ENCODE measurements at regions of chr12 and their contacts with region 1.

Region 1: GRCh38 chr12:53005986-53006809 is at the start of gene EIF4B:
- DNase-seq: peak; percentile 100
- H3K4me3 ChIP-seq: peak within 1 kb of the TSS; percentile 73
- H3K27ac ChIP-seq: peak within 1 kb of the TSS; percentile 94
- H3K4me1 ChIP-seq: peaks cover 35% of the 10 kb centered on the region
- H3K27me3 ChIP-seq: no peaks in the 10 kb centered on the region
- CTCF ChIP-seq: no peak
- total RNA-seq, gene EIF4B: 393 and 400 TPM in 2 replicates

Region 2: DNA sequence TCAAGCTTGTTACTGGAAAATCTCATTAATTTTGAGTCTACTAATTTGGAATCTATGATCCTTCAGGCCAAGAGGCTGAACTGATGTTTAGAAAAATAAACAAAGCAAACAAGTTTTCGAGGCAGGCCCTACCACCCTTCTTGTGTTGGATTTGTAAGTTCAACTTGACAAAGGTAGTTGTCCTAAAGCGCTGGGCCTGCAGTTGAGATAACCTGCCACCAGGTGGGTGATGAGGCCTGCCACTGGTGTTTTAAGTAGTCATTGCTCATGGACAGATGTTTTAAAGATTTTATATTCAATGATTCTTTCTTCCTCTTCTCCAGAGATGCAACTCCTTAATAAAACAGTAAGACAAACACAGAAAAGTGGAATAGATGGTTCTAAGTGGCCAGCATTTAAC is 1079.5 kb before region 1 on chr12:
- CTCF ChIA-PET with region 1: no interaction called
- POLR2A ChIA-PET with region 1: no interaction called
- intact Hi-C with region 1: no loop called
- DNase-seq: peak; percentile 54
- H3K4me3 ChIP-seq: no peak overlapping the region
- H3K27ac ChIP-seq: no peak overlapping the region
- H3K4me1 ChIP-seq: no peaks in the 10 kb centered on the region
- H3K27me3 ChIP-seq: no peaks in the 10 kb centered on the region
- CTCF ChIP-seq: peak; percentile 57

Region 3: DNA sequence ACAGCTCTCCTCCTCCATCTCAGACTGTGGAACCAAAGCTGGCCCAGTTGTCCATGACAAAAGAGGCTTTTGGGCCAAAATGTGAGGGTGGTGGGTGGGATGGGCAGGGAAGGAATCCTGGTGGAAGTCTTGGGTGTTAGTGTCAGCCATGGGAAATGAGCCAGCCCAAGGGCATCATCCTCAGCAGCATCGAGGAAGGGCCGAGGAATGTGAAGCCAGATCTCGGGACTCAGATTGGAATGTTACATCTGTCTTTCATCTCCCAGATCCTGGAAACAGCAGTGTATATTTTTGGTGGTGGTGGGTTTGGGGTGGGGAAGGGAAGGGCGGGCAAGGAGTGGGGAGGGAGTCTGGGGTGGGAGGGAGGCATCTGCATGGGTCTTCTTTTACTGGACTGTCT is 1011.2 kb before region 1 on chr12:
- CTCF ChIA-PET with region 1: interaction called, 12 read pairs
- POLR2A ChIA-PET with region 1: no interaction called
- intact Hi-C with region 1: no loop called
- DNase-seq: no peak
- H3K4me3 ChIP-seq: no peak overlapping the region
- H3K27ac ChIP-seq: no peak overlapping the region
- H3K4me1 ChIP-seq: no peaks in the 10 kb centered on the region
- H3K27me3 ChIP-seq: no peaks in the 10 kb centered on the region
- CTCF ChIP-seq: no peak

Region 4: GRCh38 chr12:52949413-52950331 is 56.5 kb before region 1 on chr12:
- CTCF ChIA-PET with region 1: no interaction called
- POLR2A ChIA-PET with region 1: interaction called, 3 read pairs
- intact Hi-C with region 1: loop called (anchors 5 kb)
- DNase-seq: peak; percentile 59
- H3K4me3 ChIP-seq: peak overlapping the region; percentile 54
- H3K27ac ChIP-seq: peak overlapping the region; percentile 75
- H3K4me1 ChIP-seq: peaks cover 30% of the 10 kb centered on the region
- H3K27me3 ChIP-seq: no peaks in the 10 kb centered on the region
- CTCF ChIP-seq: no peak

Measured in A673 (cell line).